Heart left ventricle (tissue), 16 donors: ENCODE measurements at regions of chr5 and their contacts with region 1.

Region 1: GRCh38 chr5:173972925-173973615 is 15.9 kb upstream of the C5orf47 start:
- DNase-seq: peak; percentile 78 to 84 (median 80)
- ATAC-seq: peak; percentile 73 to 84 (median 80)
- H3K4me3 ChIP-seq: peak overlapping the region in 11 of 12 donors; percentile 33 to 65 (median 51)
- H3K27ac ChIP-seq: peak overlapping the region in 10 of 12 donors; percentile 1 to 83 (median 65)
- H3K4me1 ChIP-seq: peaks cover 0 to 25% (median 9%) of the 10 kb centered on the region in 12 donors
- H3K27me3 ChIP-seq: peaks cover 0 to 4% (median 0%) of the 10 kb centered on the region in 9 donors
- CTCF ChIP-seq: peak; percentile 66 to 93 (median 86)
- POLR2A ChIP-seq: no peak

Region 2: GRCh38 chr5:173615884-173616576 is 357.0 kb before region 1 on chr5:
- intact Hi-C with region 1: loop called (anchors 1 to 2 kb)
- DNase-seq: peak; percentile 52 to 70 (median 57)
- ATAC-seq: peak in 3 of 4 donors; percentile 43 to 70 (median 64)
- H3K4me3 ChIP-seq: peak overlapping the region; percentile 67 to 98 (median 90)
- H3K27ac ChIP-seq: peak overlapping the region; percentile 85 to 95 (median 91)
- H3K4me1 ChIP-seq: peaks cover 0 to 56% (median 36%) of the 10 kb centered on the region in 12 donors
- H3K27me3 ChIP-seq: no peaks in the 10 kb centered on the region
- CTCF ChIP-seq: peak; percentile 25 to 79 (median 58)
- POLR2A ChIP-seq: no peak

Region 3: GRCh38 chr5:173895401-173896165 is 77.5 kb before region 1 on chr5:
- intact Hi-C with region 1: loop called in 5 of 10 experiments (anchors 2 to 5 kb)
- DNase-seq: no peak
- ATAC-seq: no peak
- H3K4me3 ChIP-seq: peak overlapping the region in 10 of 12 donors; percentile 45 to 96 (median 86)
- H3K27ac ChIP-seq: peak overlapping the region in 8 of 12 donors; percentile 3 to 97 (median 92)
- H3K4me1 ChIP-seq: peaks cover 0 to 83% (median 27%) of the 10 kb centered on the region in 12 donors
- H3K27me3 ChIP-seq: no peaks in the 10 kb centered on the region
- CTCF ChIP-seq: no peak
- POLR2A ChIP-seq: no peak